Sciatic nerve (tissue), 2 donors: ENCODE measurements at regions of chr18 and their contacts with region 1.

Region 1: GRCh38 chr18:45690975-45691815 is 32.8 kb upstream of the SLC14A1 start:
- DNase-seq: peak; percentile 90
- ATAC-seq: peak; percentile 90

Region 2: GRCh38 chr18:45642238-45642637 is 49.0 kb before region 1 on chr18:
- intact Hi-C with region 1: no loop called
- DNase-seq: no peak
- ATAC-seq: peak; percentile 25

Region 3: DNA sequence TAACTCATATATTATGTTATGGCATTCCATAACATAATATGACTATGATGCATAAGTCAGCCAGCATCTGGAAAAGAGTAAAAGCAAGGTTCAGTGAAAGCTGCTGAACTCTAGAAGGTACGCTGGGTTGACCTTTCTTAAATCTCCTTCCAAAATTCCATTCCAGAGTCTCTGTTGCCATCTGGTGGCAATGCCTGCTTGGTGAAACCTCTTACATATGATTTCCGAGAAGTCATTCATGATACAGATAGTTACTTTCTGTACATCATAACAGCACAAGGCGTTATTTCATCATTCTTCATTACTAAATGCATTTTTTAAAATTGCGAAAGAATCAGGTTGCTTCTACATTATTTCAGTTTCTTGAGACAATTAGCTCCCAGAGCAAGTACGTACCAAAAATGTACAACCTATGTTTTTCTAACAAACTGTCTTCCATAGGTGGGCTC is 282.9 kb after region 1 on chr18:
- intact Hi-C with region 1: loop called (anchors 10 kb)
- DNase-seq: peak; percentile 75
- ATAC-seq: peak; percentile 70